ENCODE measurements at regions of chr15 and their contacts with region 1.

Region 1: DNA sequence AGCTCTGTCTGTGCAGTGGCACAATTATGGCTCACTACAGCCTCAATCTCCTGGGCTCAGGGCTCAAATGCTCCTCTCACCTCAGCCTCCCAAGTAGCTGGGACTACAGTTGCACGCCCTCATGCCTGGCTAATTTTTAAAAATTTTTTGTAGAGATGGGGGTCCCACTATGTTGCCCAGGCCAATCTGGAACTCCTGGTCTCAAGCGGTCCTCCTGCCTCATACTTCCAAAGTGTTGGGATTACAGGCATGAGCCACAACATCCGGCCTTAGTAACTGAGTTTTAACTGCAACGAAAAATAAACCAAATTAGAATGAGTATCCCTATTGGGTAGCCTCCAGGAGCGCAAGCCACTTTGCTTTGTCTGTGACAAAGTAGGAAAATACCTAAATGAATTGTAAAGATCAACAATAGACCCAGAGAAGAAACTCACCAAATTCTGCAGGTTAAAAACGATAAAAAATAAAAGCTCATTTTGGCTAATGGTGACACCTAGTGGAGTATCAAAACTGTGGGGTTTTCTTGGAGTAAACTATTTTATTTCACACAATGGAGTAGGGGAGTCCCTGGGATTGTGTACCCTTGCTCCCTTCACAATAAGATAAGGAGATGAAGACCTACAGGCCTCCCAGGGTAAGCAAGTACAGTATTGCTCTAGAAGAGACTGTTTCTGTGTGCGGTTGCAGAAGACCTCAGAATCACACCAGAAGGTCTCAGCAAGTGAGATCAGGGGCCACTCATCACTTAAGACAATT is 21.0 kb upstream of the CA12 start:
- DNase-seq: no peak
- H3K4me3 ChIP-seq: no peak overlapping the region
- H3K27ac ChIP-seq: no peak overlapping the region
- H3K4me1 ChIP-seq: no peaks in the 10 kb centered on the region
- H3K27me3 ChIP-seq: no peaks in the 10 kb centered on the region
- CTCF ChIP-seq: peak; percentile 53

Region 2: GRCh38 chr15:63048115-63048775 is 354.4 kb before region 1 on chr15:
- intact Hi-C with region 1: loop called (anchors 10 kb)
- DNase-seq: peak; percentile 92
- H3K4me3 ChIP-seq: peak overlapping the region; percentile 94
- H3K27ac ChIP-seq: peak overlapping the region; percentile 97
- H3K4me1 ChIP-seq: peaks cover 12% of the 10 kb centered on the region
- H3K27me3 ChIP-seq: no peaks in the 10 kb centered on the region
- CTCF ChIP-seq: peak; percentile 90

Region 3: DNA sequence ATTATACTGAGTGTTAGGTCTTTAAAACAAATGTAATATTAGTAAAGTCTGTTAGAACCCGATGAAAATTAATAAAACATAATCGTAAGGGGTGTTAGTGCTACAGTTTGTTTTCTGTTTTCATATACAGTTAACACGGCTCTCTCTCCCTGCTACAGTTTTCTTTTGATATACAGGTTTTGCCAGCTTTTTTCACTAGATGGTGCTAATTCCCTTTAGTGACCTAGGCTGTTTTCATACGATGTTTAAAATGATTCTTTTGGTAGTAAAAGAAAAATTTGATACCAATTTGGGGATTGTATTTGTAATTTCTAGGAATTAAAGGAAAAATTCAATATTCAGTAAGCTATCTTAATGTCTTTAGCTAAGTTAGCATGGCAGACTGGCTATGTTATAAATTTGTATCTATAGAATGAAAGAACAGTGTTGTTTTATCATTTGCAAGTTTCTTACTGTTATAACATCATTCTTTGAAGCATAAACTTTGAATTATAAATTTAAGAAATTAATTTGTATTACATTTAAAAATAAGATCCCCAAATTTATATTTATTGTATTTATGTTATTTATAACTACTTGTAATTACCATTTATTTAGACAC is 113.8 kb before region 1 on chr15:
- intact Hi-C with region 1: loop called (anchors 1 kb)
- DNase-seq: no peak
- H3K4me3 ChIP-seq: no peak overlapping the region
- H3K27ac ChIP-seq: no peak overlapping the region
- H3K4me1 ChIP-seq: no peaks in the 10 kb centered on the region
- H3K27me3 ChIP-seq: no peaks in the 10 kb centered on the region
- CTCF ChIP-seq: peak; percentile 60